ENCODE measurements at regions of chr7 and their contacts with region 1.

Region 1: DNA sequence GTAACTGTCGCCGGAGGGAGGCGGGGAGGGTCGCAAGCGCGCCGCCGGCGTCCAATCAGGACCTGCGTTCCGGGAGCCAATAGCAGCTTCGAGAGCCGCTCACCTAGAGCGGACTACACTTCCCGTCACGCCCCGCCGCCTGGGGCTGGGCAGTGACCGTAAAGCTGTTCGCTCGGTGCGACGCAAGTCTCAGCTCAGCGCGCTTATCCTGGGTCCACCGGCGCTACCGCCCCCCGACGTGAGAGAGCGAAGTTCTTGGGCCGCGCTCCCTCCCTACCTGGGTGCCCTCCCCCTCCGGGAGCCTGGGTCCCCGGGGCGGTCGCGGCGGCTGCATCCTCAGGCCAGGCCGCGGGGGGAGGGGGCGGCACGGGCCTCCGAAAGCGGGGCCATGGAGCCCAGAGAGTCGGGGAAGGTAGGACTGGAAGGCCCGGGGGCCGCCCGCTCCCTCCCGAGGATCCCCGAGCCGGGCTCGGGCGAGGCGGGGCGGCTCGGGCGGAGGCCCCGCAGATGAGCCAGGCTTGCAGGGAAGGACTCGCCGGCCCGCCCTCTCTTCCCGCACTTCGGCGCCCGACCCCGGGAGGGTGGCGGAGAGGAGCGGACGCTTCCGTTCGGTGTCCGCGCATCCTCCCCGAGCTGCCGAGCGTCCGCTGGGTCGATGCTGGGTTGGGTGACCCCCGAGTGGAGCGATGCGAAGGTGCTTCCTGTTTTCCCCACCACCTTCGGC is at the start of gene ZNF862:
- DNase-seq: peak; percentile 97
- ATAC-seq: peak; percentile 95
- H3K4me3 ChIP-seq: peak within 1 kb of the TSS; percentile 60 to 88 (median 73)
- H3K4me3 Mint-ChIP-seq: peak within 1 kb of the TSS; percentile 96
- H3K27ac ChIP-seq: peak within 1 kb of the TSS; percentile 51 to 77
- H3K27ac Mint-ChIP-seq: peak within 1 kb of the TSS; percentile 93
- H3K4me1 ChIP-seq: peaks cover 13 to 15% of the 10 kb centered on the region in 2 donors
- H3K4me1 Mint-ChIP-seq: peaks cover 19% of the 10 kb centered on the region
- H3K27me3 ChIP-seq: no peaks in the 10 kb centered on the region
- H3K27me3 Mint-ChIP-seq: peaks cover 22% of the 10 kb centered on the region
- CTCF ChIP-seq: no peak
- total RNA-seq, gene ZNF862: 24.3 and 33.0 TPM in 2 replicates

Region 2: GRCh38 chr7:149195180-149196150 is 642.9 kb before region 1 on chr7 and contains the start of gene ZNF282:
- CTCF ChIA-PET with region 1: no interaction called
- POLR2A ChIA-PET with region 1: no interaction called
- intact Hi-C with region 1: loop called (anchors 5 kb)
- DNase-seq: peak; percentile 81
- ATAC-seq: peak; percentile 84
- H3K4me3 ChIP-seq: peak within 1 kb of the TSS; percentile 60 to 92 (median 83)
- H3K4me3 Mint-ChIP-seq: peak within 1 kb of the TSS; percentile 89
- H3K27ac ChIP-seq: peak within 1 kb of the TSS; percentile 47 to 76
- H3K27ac Mint-ChIP-seq: peak within 1 kb of the TSS; percentile 81
- H3K4me1 ChIP-seq: peaks cover 14 to 18% of the 10 kb centered on the region in 2 donors
- H3K4me1 Mint-ChIP-seq: peaks cover 38% of the 10 kb centered on the region
- H3K27me3 ChIP-seq: no peaks in the 10 kb centered on the region
- H3K27me3 Mint-ChIP-seq: no peaks in the 10 kb centered on the region
- CTCF ChIP-seq: peak; percentile 58
- total RNA-seq, gene ZNF282: 25.7 and 26.8 TPM in 2 replicates

Region 3: DNA sequence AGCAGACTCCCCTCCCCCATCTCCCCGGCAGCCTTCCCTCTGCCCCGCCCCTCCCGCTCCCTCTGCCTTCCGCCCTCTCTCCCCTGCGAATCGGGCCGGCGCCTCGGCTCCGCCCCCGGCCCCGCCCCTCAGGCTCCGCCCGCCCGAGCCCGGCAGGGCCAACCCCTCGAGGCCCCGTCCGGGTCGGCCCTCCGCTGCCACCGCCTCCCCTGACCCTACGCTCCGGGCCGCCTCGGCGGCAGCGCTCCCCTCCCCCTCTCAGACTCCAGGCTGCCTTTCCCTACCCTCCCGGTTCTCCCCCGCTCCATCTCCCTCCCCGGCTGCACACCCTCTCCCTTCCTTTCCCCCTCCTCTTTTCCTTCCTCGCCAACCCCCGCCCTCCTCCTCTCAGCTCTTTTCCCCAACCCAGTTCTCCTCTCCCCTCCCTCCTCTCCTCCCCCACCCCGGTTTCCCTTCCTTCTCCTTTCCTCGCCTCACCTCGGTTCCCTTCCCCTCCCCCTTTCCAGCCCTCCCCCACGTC is 66.6 kb before region 1 on chr7:
- CTCF ChIA-PET with region 1: no interaction called
- POLR2A ChIA-PET with region 1: interaction called, 5 read pairs
- intact Hi-C with region 1: loop called (anchors 1 kb)
- DNase-seq: peak; percentile 89
- ATAC-seq: peak; percentile 97
- H3K4me3 ChIP-seq: peak overlapping the region in 4 of 5 experiments; percentile 53 to 74 (median 64)
- H3K4me3 Mint-ChIP-seq: peak overlapping the region; percentile 78
- H3K27ac ChIP-seq: no peak overlapping the region
- H3K27ac Mint-ChIP-seq: no peak overlapping the region
- H3K4me1 ChIP-seq: peaks cover 7 to 19% of the 10 kb centered on the region in 2 donors
- H3K4me1 Mint-ChIP-seq: peaks cover 9% of the 10 kb centered on the region
- H3K27me3 ChIP-seq: peaks cover 0 to 19% (median 1%) of the 10 kb centered on the region in 4 experiments
- H3K27me3 Mint-ChIP-seq: peaks cover 10% of the 10 kb centered on the region
- CTCF ChIP-seq: no peak

Region 4: DNA sequence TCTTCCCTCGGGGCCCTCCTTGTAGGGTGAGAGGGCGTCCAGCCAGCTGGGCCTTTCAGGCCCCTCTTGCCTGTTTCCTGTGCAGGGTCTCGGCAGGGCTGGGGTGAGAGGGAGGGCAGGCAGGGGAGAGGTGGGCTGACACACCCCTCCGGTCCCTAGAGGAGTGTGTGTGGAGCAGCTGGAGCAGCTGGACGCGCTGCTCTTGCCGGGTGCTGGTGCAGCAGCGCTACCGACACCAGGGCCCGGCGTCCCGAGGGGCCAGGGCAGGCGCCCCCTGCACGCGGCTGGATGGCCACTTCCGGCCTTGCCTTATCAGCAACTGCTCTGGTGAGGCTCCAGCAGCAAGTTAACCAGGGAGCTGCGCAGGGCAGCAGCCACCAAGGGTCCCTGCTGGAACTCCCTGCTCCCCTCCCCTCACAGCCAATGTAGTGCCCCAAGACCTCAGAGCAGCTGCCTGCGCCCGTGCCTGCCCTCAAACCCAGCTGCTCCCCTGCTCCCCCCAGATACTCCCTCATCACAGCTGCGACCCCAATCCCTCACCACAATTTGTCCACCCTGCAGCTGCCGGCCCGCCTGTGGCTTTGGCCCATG is 15.9 kb before region 1 on chr7:
- CTCF ChIA-PET with region 1: no interaction called
- POLR2A ChIA-PET with region 1: no interaction called
- intact Hi-C with region 1: no loop called
- DNase-seq: no peak
- ATAC-seq: no peak
- H3K4me3 ChIP-seq: no peak overlapping the region
- H3K4me3 Mint-ChIP-seq: no peak overlapping the region
- H3K27ac ChIP-seq: no peak overlapping the region
- H3K27ac Mint-ChIP-seq: no peak overlapping the region
- H3K4me1 ChIP-seq: no peaks in the 10 kb centered on the region
- H3K4me1 Mint-ChIP-seq: no peaks in the 10 kb centered on the region
- H3K27me3 ChIP-seq: no peaks in the 10 kb centered on the region
- H3K27me3 Mint-ChIP-seq: peaks cover 4% of the 10 kb centered on the region
- CTCF ChIP-seq: no peak

Region 5: GRCh38 chr7:149873074-149873969 is 34.9 kb after region 1 on chr7 and contains the start of gene ATP6V0E2:
- CTCF ChIA-PET with region 1: no interaction called
- POLR2A ChIA-PET with region 1: interaction called, 3 read pairs
- intact Hi-C with region 1: loop called (anchors 1 kb)
- DNase-seq: peak; percentile 92
- ATAC-seq: peak; percentile 95
- H3K4me3 ChIP-seq: peak within 1 kb of the TSS; percentile 3 to 90 (median 73)
- H3K4me3 Mint-ChIP-seq: peak within 1 kb of the TSS; percentile 90
- H3K27ac ChIP-seq: peak within 1 kb of the TSS; percentile 41 to 66
- H3K27ac Mint-ChIP-seq: peak within 1 kb of the TSS; percentile 73
- H3K4me1 ChIP-seq: peaks cover 39 to 41% of the 10 kb centered on the region in 2 donors
- H3K4me1 Mint-ChIP-seq: peaks cover 40% of the 10 kb centered on the region
- H3K27me3 ChIP-seq: no peaks in the 10 kb centered on the region
- H3K27me3 Mint-ChIP-seq: no peaks in the 10 kb centered on the region
- CTCF ChIP-seq: no peak
- total RNA-seq, gene ATP6V0E2: 13.5 and 15.4 TPM in 2 replicates

Region 6: GRCh38 chr7:151057989-151058780 is 1219.8 kb after region 1 on chr7:
- CTCF ChIA-PET with region 1: no interaction called
- POLR2A ChIA-PET with region 1: no interaction called
- intact Hi-C with region 1: loop called (anchors 1 kb)
- DNase-seq: peak; percentile 98
- ATAC-seq: peak; percentile 92
- H3K4me3 ChIP-seq: peak overlapping the region; percentile 67 to 90 (median 73)
- H3K4me3 Mint-ChIP-seq: peak overlapping the region; percentile 96
- H3K27ac ChIP-seq: peak overlapping the region; percentile 79 to 82
- H3K27ac Mint-ChIP-seq: peak overlapping the region; percentile 94
- H3K4me1 ChIP-seq: peaks cover 23 to 40% of the 10 kb centered on the region in 2 donors
- H3K4me1 Mint-ChIP-seq: peaks cover 36% of the 10 kb centered on the region
- H3K27me3 ChIP-seq: no peaks in the 10 kb centered on the region
- H3K27me3 Mint-ChIP-seq: no peaks in the 10 kb centered on the region
- CTCF ChIP-seq: no peak